ENCODE measurements at regions of chr7 and their contacts with region 1.

Region 1: GRCh38 chr7:29105752-29106668 is 40.3 kb downstream of the CPVL start:
- DNase-seq: peak; percentile 43
- H3K4me3 ChIP-seq: no peak overlapping the region
- H3K27ac ChIP-seq: no peak overlapping the region
- H3K4me1 ChIP-seq: no peaks in the 10 kb centered on the region
- H3K27me3 ChIP-seq: no peaks in the 10 kb centered on the region
- CTCF ChIP-seq: peak; percentile 45 to 78 (median 74)
- POLR2A ChIP-seq: no peak

Region 2: DNA sequence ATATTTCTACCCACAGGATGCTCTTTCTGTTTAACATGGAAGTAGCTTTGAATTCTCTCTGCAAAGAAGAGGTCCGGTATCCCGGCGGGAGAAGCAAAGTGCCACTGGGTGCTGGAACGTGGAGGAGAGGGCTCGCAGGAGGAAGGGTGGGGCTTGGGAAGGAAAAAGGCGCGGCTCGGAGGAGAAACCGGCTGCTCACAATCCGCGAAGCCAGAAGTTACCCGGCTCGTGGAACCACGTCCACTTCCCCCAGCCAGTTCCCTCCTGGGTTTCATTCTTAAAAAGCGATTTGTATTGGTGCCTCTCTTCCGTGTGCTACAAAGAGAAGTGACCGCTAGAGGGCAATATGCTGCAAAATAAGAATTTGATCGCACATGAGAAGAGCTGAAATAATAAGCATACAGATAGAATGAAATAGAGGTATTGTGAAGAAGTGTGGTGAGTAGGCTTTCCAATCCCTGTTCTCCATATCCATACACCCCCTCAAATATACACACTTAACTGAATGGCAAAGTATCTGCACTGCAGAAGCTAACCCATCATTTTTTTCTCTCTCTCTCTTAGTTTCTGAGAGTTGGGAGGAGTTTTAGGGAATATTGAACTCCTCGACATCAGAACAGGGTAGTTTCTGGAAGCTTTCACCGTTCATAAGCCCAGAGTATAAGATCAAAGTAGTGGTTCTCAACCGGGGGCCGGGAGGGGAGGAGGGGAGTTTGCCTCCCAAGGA is 179.0 kb before region 1 on chr7:
- intact Hi-C with region 1: loop called (anchors 5 kb)
- DNase-seq: peak; percentile 81
- H3K4me3 ChIP-seq: peak overlapping the region; percentile 19 to 65
- H3K27ac ChIP-seq: no peak overlapping the region
- H3K4me1 ChIP-seq: peaks cover 4% of the 10 kb centered on the region
- H3K27me3 ChIP-seq: no peaks in the 10 kb centered on the region
- CTCF ChIP-seq: peak; percentile 72 to 84 (median 76)
- POLR2A ChIP-seq: no peak

Region 3: GRCh38 chr7:29038463-29038862 is 67.5 kb before region 1 on chr7:
- intact Hi-C with region 1: no loop called
- DNase-seq: no peak
- H3K4me3 ChIP-seq: no peak overlapping the region
- H3K27ac ChIP-seq: no peak overlapping the region
- H3K4me1 ChIP-seq: no peaks in the 10 kb centered on the region
- H3K27me3 ChIP-seq: no peaks in the 10 kb centered on the region
- CTCF ChIP-seq: no peak
- POLR2A ChIP-seq: no peak

Measured in testis (tissue), 5 donors.